B cell (primary cell): ENCODE measurements at regions of chr11 and their contacts with region 1.

Region 1: DNA sequence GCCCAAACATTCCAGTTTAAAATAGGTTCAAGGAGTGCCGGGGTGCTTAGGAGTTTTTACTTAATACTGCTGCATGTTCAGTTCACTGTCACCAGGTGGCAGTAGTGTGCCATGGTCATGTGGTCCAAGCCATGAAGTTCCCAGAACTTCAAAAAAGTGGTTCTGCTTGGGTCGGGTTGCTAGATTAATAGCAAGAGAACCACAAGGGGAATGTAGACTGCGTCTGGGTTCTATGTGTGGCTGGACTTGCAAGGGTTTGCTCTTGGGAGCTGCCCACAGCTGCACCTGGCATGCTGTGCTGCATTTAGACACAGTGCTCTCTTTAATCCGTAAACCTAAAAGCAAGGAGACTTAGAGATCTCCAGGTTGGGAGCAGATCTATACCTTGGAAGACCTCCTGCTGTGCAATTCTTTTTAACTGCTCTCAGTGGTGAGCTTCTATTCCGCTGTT is 6.5 kb upstream of the SPON1 start:
- DNase-seq: peak; percentile 79
- ATAC-seq: peak; percentile 66
- H3K4me3 ChIP-seq: no peak overlapping the region
- H3K4me3 Mint-ChIP-seq: no peak overlapping the region
- H3K27ac ChIP-seq: no peak overlapping the region
- H3K27ac Mint-ChIP-seq: no peak overlapping the region
- H3K4me1 ChIP-seq: no peaks in the 10 kb centered on the region
- H3K4me1 Mint-ChIP-seq: no peaks in the 10 kb centered on the region
- H3K27me3 ChIP-seq: peaks cover 0 to 33% (median 20%) of the 10 kb centered on the region in 4 experiments
- H3K27me3 Mint-ChIP-seq: peaks cover 38% of the 10 kb centered on the region
- CTCF ChIP-seq: peak; percentile 91

Region 2: DNA sequence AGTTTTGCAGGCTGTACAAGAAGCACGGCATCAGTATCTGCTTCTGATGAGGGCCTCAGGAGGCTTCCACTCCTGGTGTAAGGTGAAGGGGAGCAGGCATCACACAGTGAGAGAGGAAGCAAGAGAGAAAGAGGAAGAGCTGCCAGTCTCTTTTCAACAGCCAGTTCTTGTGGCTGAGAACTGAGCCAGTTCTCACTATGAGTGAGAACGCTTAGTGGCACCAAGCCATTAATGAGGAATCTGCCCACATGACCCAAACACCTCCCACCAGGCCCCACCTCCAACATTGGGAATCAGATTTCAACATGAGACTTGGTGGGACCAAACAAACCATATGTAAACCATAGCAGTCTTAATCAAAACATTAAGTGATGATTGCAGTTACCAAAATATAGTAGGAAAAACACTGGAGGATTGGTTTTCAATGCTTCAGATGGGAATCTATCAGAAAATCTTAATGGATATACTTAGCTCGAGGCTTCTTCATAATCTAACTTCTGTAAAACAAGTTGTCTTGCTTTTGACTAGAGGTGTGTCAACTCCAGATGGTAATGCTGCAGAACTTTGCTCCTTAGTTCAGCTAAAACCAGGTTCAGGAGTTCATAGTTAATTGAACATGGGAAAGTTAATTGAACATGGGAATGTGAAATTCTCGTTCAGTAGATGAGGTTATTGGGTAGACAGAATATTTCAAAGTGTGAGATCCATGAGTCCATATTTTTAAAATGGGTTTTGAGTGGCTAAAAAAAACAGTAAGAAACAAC is 275.3 kb before region 1 on chr11:
- CTCF ChIA-PET with region 1: no interaction called
- POLR2A ChIA-PET with region 1: no interaction called
- intact Hi-C with region 1: no loop called
- DNase-seq: peak; percentile 25
- ATAC-seq: peak; percentile 49
- H3K4me3 ChIP-seq: no peak overlapping the region
- H3K4me3 Mint-ChIP-seq: no peak overlapping the region
- H3K27ac ChIP-seq: peak overlapping the region in 1 of 2 donors; percentile 32
- H3K27ac Mint-ChIP-seq: peak overlapping the region; percentile 32
- H3K4me1 ChIP-seq: peaks cover 3 to 6% of the 10 kb centered on the region in 2 donors
- H3K4me1 Mint-ChIP-seq: peaks cover 40% of the 10 kb centered on the region
- H3K27me3 ChIP-seq: no peaks in the 10 kb centered on the region
- H3K27me3 Mint-ChIP-seq: no peaks in the 10 kb centered on the region
- CTCF ChIP-seq: no peak

Region 3: DNA sequence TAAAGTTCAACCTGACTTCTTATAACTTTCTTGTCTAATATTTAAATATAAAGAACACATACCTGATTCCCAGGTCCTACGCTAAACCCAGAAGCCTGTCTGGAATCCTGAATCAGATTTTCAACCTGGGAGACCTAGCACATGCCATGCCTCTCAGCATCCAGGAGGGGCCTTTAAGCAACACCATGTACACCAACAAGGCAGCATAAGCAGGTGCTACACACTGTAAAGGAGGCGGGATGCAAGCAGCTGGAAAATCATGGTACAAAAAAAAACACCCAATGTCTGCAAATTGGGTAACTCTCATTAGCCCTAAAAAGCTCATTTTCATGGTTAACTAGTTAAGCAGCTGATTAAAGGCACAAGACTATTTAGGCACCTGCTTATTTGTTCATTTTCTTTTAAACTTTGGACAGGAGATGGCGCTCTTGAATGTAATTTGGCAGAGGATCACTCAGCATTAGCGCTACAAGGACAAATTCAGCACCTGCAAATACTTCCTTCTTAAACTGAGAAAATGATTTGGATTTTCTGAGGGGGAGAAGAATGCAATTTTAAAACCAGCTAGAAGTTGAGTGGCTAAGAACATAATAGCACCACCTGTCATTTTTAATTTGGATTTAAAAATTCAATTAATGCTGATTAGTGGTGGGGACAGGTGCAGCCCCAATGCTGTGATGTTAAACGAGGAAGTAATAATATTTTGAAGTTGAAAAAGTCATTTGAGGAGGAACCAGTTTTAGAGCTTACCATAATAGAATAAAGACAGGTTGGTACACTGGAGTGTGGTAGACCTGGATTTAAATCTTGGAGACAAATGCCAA is 183.6 kb before region 1 on chr11:
- CTCF ChIA-PET with region 1: interaction called, 10 read pairs
- POLR2A ChIA-PET with region 1: no interaction called
- intact Hi-C with region 1: loop called (anchors 1 kb)
- DNase-seq: peak; percentile 79
- ATAC-seq: peak; percentile 65
- H3K4me3 ChIP-seq: no peak overlapping the region
- H3K4me3 Mint-ChIP-seq: no peak overlapping the region
- H3K27ac ChIP-seq: no peak overlapping the region
- H3K27ac Mint-ChIP-seq: no peak overlapping the region
- H3K4me1 ChIP-seq: peaks cover 0 to 7% of the 10 kb centered on the region in 2 donors
- H3K4me1 Mint-ChIP-seq: peaks cover 6% of the 10 kb centered on the region
- H3K27me3 ChIP-seq: peaks cover 0 to 4% (median 0%) of the 10 kb centered on the region in 4 experiments
- H3K27me3 Mint-ChIP-seq: peaks cover 17% of the 10 kb centered on the region
- CTCF ChIP-seq: peak; percentile 79

Region 4: DNA sequence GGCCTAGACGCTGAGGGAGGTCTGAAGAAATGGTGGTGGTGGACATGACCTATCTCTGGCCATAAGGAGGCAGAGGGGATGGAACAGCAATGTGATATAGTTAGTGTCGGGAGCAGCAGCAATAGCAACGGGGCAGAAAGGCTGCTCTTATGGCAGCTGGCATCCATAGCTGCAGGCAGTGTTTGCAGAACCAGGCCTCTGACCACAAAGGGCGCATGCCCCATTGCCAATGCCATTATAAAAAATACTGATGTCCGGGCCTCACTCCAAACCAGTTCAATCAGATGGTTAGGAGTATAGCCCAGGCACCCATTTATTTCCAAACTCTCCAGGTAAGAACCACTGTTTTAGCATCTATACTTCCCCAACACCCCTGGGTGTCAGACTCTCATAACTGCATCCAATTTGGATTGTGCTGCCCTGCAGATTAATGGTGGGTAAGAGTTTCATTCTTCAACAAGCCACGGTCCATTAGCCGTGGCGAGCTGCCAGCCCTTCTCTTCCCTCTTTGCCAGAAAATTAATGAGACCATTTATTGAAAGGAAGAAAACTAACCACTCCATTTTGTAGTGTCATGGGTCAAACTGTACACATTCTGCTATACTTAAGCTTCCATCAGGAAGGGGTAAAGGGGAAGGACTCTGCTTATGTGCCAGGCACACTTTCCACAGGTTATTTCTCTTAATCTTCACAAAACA is 66.3 kb before region 1 on chr11:
- CTCF ChIA-PET with region 1: no interaction called
- POLR2A ChIA-PET with region 1: no interaction called
- intact Hi-C with region 1: no loop called
- DNase-seq: no peak
- ATAC-seq: no peak
- H3K4me3 ChIP-seq: no peak overlapping the region
- H3K4me3 Mint-ChIP-seq: no peak overlapping the region
- H3K27ac ChIP-seq: no peak overlapping the region
- H3K27ac Mint-ChIP-seq: no peak overlapping the region
- H3K4me1 ChIP-seq: no peaks in the 10 kb centered on the region
- H3K4me1 Mint-ChIP-seq: no peaks in the 10 kb centered on the region
- H3K27me3 ChIP-seq: no peaks in the 10 kb centered on the region
- H3K27me3 Mint-ChIP-seq: peaks cover 4% of the 10 kb centered on the region
- CTCF ChIP-seq: no peak

Region 5: DNA sequence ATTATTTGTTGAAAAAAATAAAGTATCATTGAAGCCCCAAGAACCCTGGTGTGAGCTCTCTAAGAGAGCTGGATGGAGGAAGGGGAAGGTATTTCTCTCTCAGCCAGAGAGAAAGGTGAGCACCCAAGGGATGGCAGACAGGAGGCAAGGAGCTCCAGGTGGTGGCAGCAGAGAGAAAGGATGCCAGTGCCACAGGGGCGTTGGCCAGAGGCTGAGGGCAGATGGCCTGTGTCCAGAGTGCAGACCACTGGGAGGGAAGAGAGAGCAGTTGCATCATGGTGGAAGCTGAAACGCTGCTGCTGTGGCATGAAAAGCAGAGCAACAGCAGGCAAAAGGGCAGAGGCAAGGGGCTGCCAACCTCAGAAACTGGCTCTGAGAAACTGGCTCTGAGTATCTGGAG is 15.0 kb after region 1 on chr11:
- CTCF ChIA-PET with region 1: interaction called, 29 read pairs
- POLR2A ChIA-PET with region 1: no interaction called
- intact Hi-C with region 1: no loop called
- DNase-seq: no peak
- ATAC-seq: no peak
- H3K4me3 ChIP-seq: no peak overlapping the region
- H3K4me3 Mint-ChIP-seq: no peak overlapping the region
- H3K27ac ChIP-seq: no peak overlapping the region
- H3K27ac Mint-ChIP-seq: no peak overlapping the region
- H3K4me1 ChIP-seq: no peaks in the 10 kb centered on the region
- H3K4me1 Mint-ChIP-seq: peaks cover 2% of the 10 kb centered on the region
- H3K27me3 ChIP-seq: peaks cover 0 to 14% (median 8%) of the 10 kb centered on the region in 4 experiments
- H3K27me3 Mint-ChIP-seq: peaks cover 49% of the 10 kb centered on the region
- CTCF ChIP-seq: no peak

Region 6: GRCh38 chr11:13983081-13983751 is 27.2 kb after region 1 on chr11:
- CTCF ChIA-PET with region 1: no interaction called
- POLR2A ChIA-PET with region 1: no interaction called
- intact Hi-C with region 1: no loop called
- DNase-seq: no peak
- ATAC-seq: no peak
- H3K4me3 ChIP-seq: no peak overlapping the region
- H3K4me3 Mint-ChIP-seq: no peak overlapping the region
- H3K27ac ChIP-seq: no peak overlapping the region
- H3K27ac Mint-ChIP-seq: no peak overlapping the region
- H3K4me1 ChIP-seq: no peaks in the 10 kb centered on the region
- H3K4me1 Mint-ChIP-seq: no peaks in the 10 kb centered on the region
- H3K27me3 ChIP-seq: no peaks in the 10 kb centered on the region
- H3K27me3 Mint-ChIP-seq: peaks cover 9% of the 10 kb centered on the region
- CTCF ChIP-seq: no peak

Region 7: GRCh38 chr11:14148653-14149273 is 192.8 kb after region 1 on chr11:
- CTCF ChIA-PET with region 1: interaction called, 15 read pairs
- POLR2A ChIA-PET with region 1: no interaction called
- intact Hi-C with region 1: loop called (anchors 1 kb)
- DNase-seq: peak; percentile 30
- ATAC-seq: peak; percentile 14
- H3K4me3 ChIP-seq: no peak overlapping the region
- H3K4me3 Mint-ChIP-seq: no peak overlapping the region
- H3K27ac ChIP-seq: no peak overlapping the region
- H3K27ac Mint-ChIP-seq: no peak overlapping the region
- H3K4me1 ChIP-seq: no peaks in the 10 kb centered on the region
- H3K4me1 Mint-ChIP-seq: no peaks in the 10 kb centered on the region
- H3K27me3 ChIP-seq: peaks cover 0 to 4% (median 2%) of the 10 kb centered on the region in 4 experiments
- H3K27me3 Mint-ChIP-seq: peaks cover 23% of the 10 kb centered on the region
- CTCF ChIP-seq: peak; percentile 63

Region 8: GRCh38 chr11:14237444-14237961 is 281.5 kb after region 1 on chr11:
- CTCF ChIA-PET with region 1: interaction called, 17 read pairs
- POLR2A ChIA-PET with region 1: no interaction called
- intact Hi-C with region 1: no loop called
- DNase-seq: peak; percentile 92
- ATAC-seq: peak; percentile 97
- H3K4me3 ChIP-seq: peak overlapping the region in 1 of 5 experiments; percentile 22
- H3K4me3 Mint-ChIP-seq: peak overlapping the region; percentile 70
- H3K27ac ChIP-seq: peak overlapping the region; percentile 62 to 73
- H3K27ac Mint-ChIP-seq: peak overlapping the region; percentile 84
- H3K4me1 ChIP-seq: peaks cover 32 to 34% of the 10 kb centered on the region in 2 donors
- H3K4me1 Mint-ChIP-seq: peaks cover 38% of the 10 kb centered on the region
- H3K27me3 ChIP-seq: no peaks in the 10 kb centered on the region
- H3K27me3 Mint-ChIP-seq: peaks cover 7% of the 10 kb centered on the region
- CTCF ChIP-seq: no peak

Region 9: GRCh38 chr11:14249121-14249963 is 293.3 kb after region 1 on chr11:
- CTCF ChIA-PET with region 1: interaction called, 113 read pairs
- POLR2A ChIA-PET with region 1: no interaction called
- intact Hi-C with region 1: loop called (anchors 1 kb)
- DNase-seq: peak; percentile 77
- ATAC-seq: peak; percentile 53
- H3K4me3 ChIP-seq: peak overlapping the region in 2 of 5 experiments; percentile 27
- H3K4me3 Mint-ChIP-seq: peak overlapping the region; percentile 50
- H3K27ac ChIP-seq: no peak overlapping the region
- H3K27ac Mint-ChIP-seq: no peak overlapping the region
- H3K4me1 ChIP-seq: peaks cover 10 to 11% of the 10 kb centered on the region in 2 donors
- H3K4me1 Mint-ChIP-seq: peaks cover 19% of the 10 kb centered on the region
- H3K27me3 ChIP-seq: peaks cover 0 to 18% (median 7%) of the 10 kb centered on the region in 4 experiments
- H3K27me3 Mint-ChIP-seq: peaks cover 30% of the 10 kb centered on the region
- CTCF ChIP-seq: peak; percentile 98

Region 10: DNA sequence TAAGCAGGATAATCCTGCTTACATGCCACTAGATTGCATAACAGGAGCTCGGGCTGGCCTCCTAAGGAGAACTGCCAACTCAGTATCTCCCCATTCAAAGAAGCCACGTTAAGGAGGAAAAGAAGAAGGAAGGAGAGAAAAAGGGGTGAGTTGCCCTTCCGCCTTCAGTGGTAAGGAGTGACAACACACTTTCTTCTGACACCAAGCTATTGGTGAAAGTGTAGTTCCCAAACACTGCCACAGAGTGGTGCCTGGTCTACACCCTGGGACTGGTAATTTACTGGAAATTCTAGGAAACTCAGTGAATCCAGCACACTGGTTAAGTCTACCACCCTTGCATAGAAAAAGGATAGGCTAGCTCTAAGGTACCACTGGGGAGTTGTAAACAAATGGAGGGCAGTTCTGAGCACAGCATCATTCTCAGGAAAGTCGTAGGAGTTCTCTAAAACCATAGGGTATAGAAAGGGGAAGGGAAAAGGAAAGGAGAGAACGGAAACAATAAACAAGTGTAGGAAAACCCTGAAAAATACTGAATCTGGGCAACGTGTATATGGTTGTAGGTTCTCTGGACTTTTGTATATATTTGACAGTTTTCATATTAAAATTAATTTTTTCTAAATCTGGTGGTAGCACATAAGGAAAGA is 344.8 kb after region 1 on chr11:
- CTCF ChIA-PET with region 1: no interaction called
- POLR2A ChIA-PET with region 1: no interaction called
- intact Hi-C with region 1: no loop called
- DNase-seq: peak; percentile 75
- ATAC-seq: peak; percentile 93
- H3K4me3 ChIP-seq: no peak overlapping the region
- H3K4me3 Mint-ChIP-seq: no peak overlapping the region
- H3K27ac ChIP-seq: no peak overlapping the region
- H3K27ac Mint-ChIP-seq: no peak overlapping the region
- H3K4me1 ChIP-seq: peaks cover 45 to 64% of the 10 kb centered on the region in 2 donors
- H3K4me1 Mint-ChIP-seq: peaks cover 59% of the 10 kb centered on the region
- H3K27me3 ChIP-seq: no peaks in the 10 kb centered on the region
- H3K27me3 Mint-ChIP-seq: no peaks in the 10 kb centered on the region
- CTCF ChIP-seq: peak; percentile 80